K562 (cell line): ENCODE measurements at regions of chr10 and their contacts with region 1.

Region 1: DNA sequence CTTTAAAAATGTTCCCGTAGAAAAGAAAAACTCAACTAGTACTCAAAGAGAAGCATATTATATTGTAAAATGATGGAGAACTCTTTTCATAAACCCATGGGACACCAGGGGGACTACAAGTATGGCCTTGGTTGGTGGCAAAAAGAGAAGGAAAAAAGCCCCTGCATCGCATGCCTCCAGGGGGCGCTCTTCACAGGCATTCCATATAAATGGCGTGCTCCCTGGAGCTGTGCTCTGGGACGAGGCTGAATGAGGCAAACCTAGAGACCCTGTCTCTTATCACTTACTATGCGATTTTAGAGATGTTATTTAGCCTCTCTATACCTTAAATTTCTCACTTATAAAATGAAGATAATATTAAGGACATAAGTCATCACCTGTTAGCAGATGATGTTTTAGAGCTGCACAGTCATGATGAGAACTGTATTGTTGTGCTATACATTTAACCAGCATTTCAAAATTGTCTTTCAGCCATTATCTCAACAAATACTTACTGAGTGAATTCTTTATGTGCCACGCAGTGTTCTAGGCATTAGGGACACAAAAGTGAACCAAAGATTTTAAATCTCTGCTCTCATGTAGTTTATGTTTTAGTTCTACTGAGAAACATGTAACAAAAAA is 105.8 kb downstream of the ARHGAP21 start:
- DNase-seq: peak; percentile 55 to 80 (median 66)
- ATAC-seq: peak; percentile 98
- H3K4me3 ChIP-seq: no peak overlapping the region
- H3K27ac ChIP-seq: no peak overlapping the region
- H3K4me1 ChIP-seq: no peaks in the 10 kb centered on the region; a peak in 2 of 5 replicates
- H3K27me3 ChIP-seq: no peaks in the 10 kb centered on the region
- CTCF ChIP-seq: peak; percentile 94 to 96 (median 94)
- EP300 ChIP-seq: no peak
- POLR2A ChIP-seq: no peak
- RAD21 ChIP-seq: peak; percentile 58 to 79

Region 2: GRCh38 chr10:24891823-24892222 is 273.9 kb after region 1 on chr10:
- CTCF ChIA-PET with region 1: no interaction called
- POLR2A ChIA-PET with region 1: no interaction called
- in situ Hi-C with region 1: no loop called
- intact Hi-C with region 1: no loop called
- DNase-seq: no peak
- ATAC-seq: no peak
- H3K4me3 ChIP-seq: no peak overlapping the region
- H3K27ac ChIP-seq: no peak overlapping the region
- H3K4me1 ChIP-seq: peaks cover 3 to 17% of the 10 kb centered on the region in 2 experiments
- H3K27me3 ChIP-seq: no peaks in the 10 kb centered on the region
- CTCF ChIP-seq: no peak
- EP300 ChIP-seq: no peak
- POLR2A ChIP-seq: no peak
- RAD21 ChIP-seq: no peak

Region 3: DNA sequence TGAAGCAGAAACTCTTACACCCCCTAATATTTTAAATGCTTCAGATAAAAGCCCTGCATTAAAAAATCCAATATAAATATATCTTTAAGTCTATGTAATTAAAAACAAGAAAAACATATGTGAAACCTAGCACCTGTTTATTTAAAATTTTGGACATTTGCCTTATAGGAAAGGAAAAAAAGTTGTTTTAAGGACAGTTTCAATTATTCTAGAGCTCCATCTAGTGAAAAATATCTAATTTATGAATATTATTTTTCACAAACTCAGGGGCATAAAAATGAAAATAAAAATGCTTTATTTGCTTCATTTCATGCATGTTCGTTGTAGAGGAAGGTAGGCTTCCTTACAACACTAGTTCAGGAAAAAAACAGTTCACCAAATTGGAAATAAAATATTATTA is 372.0 kb after region 1 on chr10:
- CTCF ChIA-PET with region 1: interaction called, 3 read pairs
- POLR2A ChIA-PET with region 1: no interaction called
- in situ Hi-C with region 1: no loop called
- intact Hi-C with region 1: loop called (anchors 2 kb)
- DNase-seq: no peak
- ATAC-seq: no peak
- H3K4me3 ChIP-seq: no peak overlapping the region
- H3K27ac ChIP-seq: no peak overlapping the region
- H3K4me1 ChIP-seq: peaks cover 9 to 11% of the 10 kb centered on the region in 2 experiments
- H3K27me3 ChIP-seq: no peaks in the 10 kb centered on the region
- CTCF ChIP-seq: peak in 1 of 3 experiments; percentile 31; a peak in 2 of 6 replicates
- EP300 ChIP-seq: no peak
- POLR2A ChIP-seq: no peak
- RAD21 ChIP-seq: peak; percentile 20 to 52; a peak in 3 of 4 replicates